AG04449 (cell line): ENCODE measurements at regions of chr5 and their contacts with region 1.

Region 1: DNA sequence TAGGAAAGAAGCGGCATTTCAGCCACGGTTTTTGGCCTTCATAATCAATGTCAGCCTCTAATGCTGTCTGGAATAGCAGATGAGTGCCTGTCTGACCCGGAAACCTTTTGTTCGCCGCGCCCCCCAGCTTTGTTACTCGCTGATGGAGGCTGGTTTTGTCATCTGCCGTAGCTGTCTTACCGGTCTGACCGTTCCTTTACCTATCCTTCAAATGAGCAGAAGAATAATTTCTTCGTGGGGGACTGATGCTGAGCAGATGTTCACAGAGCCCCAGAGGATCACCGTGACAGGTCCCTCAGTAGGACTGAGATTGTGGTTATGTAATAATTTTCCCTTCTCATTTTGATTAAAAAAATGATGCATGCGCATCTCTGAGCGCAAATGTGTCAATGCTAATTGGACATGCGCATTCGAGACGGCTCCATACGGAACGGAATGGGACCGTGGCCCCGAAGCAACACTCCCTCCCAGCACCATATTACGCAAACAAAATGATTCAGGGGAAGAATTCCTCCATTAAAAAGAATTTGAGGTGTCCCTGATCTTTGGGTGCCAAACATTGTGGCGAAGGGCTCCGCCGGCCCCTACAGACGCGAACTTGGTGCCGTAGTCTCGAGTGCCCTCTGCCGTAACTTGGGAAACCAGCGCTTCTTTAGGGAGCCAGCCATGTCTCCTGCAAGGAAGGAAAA is 27.6 kb downstream of the TLX3 start:
- DNase-seq: peak; percentile 5
- H3K4me3 ChIP-seq: peak overlapping the region; percentile 61
- CTCF ChIP-seq: peak; percentile 81

Region 2: DNA sequence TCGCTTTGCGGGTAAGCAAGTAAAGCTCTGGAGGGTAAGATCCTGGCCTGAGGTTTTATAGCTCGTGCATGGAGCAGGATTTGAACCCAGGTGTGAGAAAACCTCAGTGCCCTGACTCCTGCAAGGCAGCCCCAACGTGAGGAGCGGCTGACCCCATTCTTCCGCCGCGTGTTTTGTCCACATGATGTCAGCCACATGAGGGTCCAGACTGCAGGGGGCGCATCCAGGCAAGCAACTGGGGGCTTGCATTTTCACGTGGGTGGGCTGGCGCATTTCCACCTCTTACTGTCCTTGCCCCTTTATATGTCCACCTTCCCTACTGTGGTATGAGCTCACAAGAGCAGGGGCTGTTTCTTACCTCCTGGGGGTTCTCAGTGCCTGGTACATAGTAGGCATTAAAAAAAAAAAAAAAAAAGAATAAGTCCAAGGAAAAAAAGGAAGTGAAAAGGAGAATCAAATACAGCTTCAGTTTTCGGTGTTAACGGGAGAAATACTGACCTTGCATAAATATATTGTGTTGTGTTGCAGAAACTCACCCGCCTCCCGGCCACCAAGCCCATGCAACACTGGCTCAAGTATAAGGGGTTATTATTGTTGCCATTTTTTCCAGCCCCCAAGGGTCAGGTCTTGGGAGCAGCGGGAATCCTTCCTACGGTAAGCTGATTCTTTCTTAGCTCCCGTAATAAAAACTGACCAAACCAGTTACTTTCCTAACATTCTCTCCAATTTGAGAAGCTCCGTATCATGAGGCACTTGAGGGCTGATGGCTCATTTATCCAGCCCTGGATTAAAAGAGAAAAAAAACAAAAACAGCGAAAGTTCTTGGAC is 12.6 kb before region 1 on chr5:
- CTCF ChIA-PET with region 1: interaction called, 14 read pairs
- POLR2A ChIA-PET with region 1: no interaction called
- DNase-seq: no peak
- H3K4me3 ChIP-seq: no peak overlapping the region
- CTCF ChIP-seq: no peak

Region 3: DNA sequence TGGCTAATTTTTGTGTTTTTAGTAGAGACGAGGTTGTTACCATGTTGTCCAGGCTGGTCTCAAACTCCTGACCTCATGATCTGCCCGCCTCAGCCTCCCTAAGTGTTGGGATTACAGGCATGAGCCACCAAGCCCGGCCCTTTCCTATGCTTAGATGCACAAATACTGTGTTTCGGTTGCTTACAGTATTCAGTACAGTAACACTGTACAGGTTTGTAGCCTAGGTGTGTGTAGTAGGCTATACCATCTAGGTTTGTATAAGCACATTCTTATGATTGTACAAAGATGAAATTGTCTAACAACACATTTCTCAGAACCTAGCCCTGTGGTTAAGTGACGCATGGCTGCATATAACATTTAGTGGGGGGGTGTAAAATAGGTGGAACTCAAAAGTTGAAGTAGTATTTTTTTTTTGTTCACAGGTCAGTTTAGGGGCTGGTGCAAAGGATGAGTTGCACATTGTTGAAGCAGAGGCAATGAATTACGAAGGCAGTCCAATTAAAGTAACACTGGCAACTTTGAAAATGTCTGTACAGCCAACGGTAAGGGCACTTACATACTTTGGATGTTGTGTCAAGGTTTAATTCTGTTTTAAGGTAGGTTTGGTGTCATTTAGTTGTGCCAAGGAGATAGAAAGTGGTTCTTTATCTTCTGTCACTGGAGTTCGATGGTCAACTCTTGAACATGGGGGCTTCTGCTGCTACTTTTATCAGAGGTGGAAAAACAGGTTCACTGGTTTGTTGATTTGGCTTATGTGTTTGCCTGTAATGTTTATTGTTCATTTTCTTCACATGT is 54.4 kb after region 1 on chr5:
- CTCF ChIA-PET with region 1: no interaction called
- POLR2A ChIA-PET with region 1: no interaction called
- DNase-seq: no peak
- H3K4me3 ChIP-seq: peak overlapping the region; percentile 29; the same call in 1 of the 2 replicates
- CTCF ChIP-seq: no peak